ENCODE measurements at regions of chr7 and their contacts with region 1.

Region 1: GRCh38 chr7:44477063-44477830 is 13.2 kb downstream of the NUDCD3 start:
- DNase-seq: peak; percentile 76
- ATAC-seq: peak; percentile 95
- H3K4me3 Mint-ChIP-seq: no peak overlapping the region
- H3K27ac Mint-ChIP-seq: no peak overlapping the region
- H3K4me1 Mint-ChIP-seq: peaks cover 32% of the 10 kb centered on the region
- H3K27me3 Mint-ChIP-seq: no peaks in the 10 kb centered on the region

Region 2: DNA sequence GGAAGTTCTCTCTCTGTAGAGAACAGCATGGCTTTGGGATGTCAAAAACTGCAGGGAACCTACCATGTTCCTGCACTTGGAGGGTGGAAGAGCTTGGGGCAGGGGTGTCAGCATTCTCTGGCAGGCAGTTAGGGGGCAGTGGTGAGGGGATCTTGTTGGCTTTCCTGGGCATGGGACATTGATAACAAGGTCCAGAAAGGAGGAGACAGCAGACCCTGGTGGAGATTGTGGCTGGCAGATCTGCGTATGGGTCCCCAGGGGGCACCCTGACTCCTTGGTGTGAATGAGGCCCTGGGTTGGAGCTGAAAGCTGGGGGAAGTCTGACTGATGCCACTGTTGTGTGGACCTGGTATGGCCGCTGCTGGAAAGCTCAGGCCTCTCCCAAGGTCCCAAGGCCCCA is 128.9 kb before region 1 on chr7:
- CTCF ChIA-PET with region 1: no interaction called
- POLR2A ChIA-PET with region 1: no interaction called
- intact Hi-C with region 1: loop called in 1 of 2 experiments (anchors 1 kb)
- DNase-seq: peak; percentile 32
- ATAC-seq: peak; percentile 61
- H3K4me3 Mint-ChIP-seq: no peak overlapping the region
- H3K27ac Mint-ChIP-seq: no peak overlapping the region
- H3K4me1 Mint-ChIP-seq: no peaks in the 10 kb centered on the region
- H3K27me3 Mint-ChIP-seq: peaks cover 9% of the 10 kb centered on the region

Region 3: GRCh38 chr7:44431091-44431608 is 46.1 kb before region 1 on chr7:
- CTCF ChIA-PET with region 1: interaction called, 3 read pairs
- POLR2A ChIA-PET with region 1: no interaction called
- intact Hi-C with region 1: loop called in 1 of 2 experiments (anchors 2 kb)
- DNase-seq: peak; percentile 47
- ATAC-seq: no peak
- H3K4me3 Mint-ChIP-seq: no peak overlapping the region
- H3K27ac Mint-ChIP-seq: no peak overlapping the region
- H3K4me1 Mint-ChIP-seq: peaks cover 50% of the 10 kb centered on the region
- H3K27me3 Mint-ChIP-seq: no peaks in the 10 kb centered on the region

Region 4: GRCh38 chr7:44460325-44460724 is 16.9 kb before region 1 on chr7:
- CTCF ChIA-PET with region 1: interaction called, 10 read pairs
- POLR2A ChIA-PET with region 1: no interaction called
- intact Hi-C with region 1: no loop called
- DNase-seq: peak; percentile 72
- ATAC-seq: peak; percentile 85
- H3K4me3 Mint-ChIP-seq: peak overlapping the region; percentile 55
- H3K27ac Mint-ChIP-seq: peak overlapping the region; percentile 100
- H3K4me1 Mint-ChIP-seq: peaks cover 66% of the 10 kb centered on the region
- H3K27me3 Mint-ChIP-seq: no peaks in the 10 kb centered on the region